PC-3 (cell line): ENCODE measurements at regions of chr5 and their contacts with region 1.

Region 1: GRCh38 chr5:151740336-151740942 is 18.0 kb downstream of the ATOX1 start:
- DNase-seq: peak; percentile 76
- ATAC-seq: peak; percentile 27
- H3K4me3 ChIP-seq: no peak overlapping the region
- H3K27ac ChIP-seq: peak overlapping the region; percentile 70
- H3K4me1 ChIP-seq: peaks cover 57% of the 10 kb centered on the region
- H3K27me3 ChIP-seq: no peaks in the 10 kb centered on the region
- CTCF ChIP-seq: peak; percentile 93

Region 2: GRCh38 chr5:151447174-151448037 is 293.0 kb before region 1 on chr5 and contains the start of gene SLC36A1:
- CTCF ChIA-PET with region 1: interaction called, 4 read pairs
- POLR2A ChIA-PET with region 1: no interaction called
- intact Hi-C with region 1: loop called (anchors 1 kb)
- DNase-seq: peak; percentile 95
- ATAC-seq: peak; percentile 77
- H3K4me3 ChIP-seq: peak within 1 kb of the TSS; percentile 82
- H3K27ac ChIP-seq: no peak within 1 kb of the TSS
- H3K4me1 ChIP-seq: peaks cover 25% of the 10 kb centered on the region
- H3K27me3 ChIP-seq: 0 out of 2 replicates have a peak, but pooled peaks cover 3% of the 10 kb centered on the region
- CTCF ChIP-seq: peak; percentile 91
- total RNA-seq, gene SLC36A1: 3.6 and 5.7 TPM in 2 replicates

Region 3: GRCh38 chr5:151617841-151618710 is 122.4 kb before region 1 on chr5:
- CTCF ChIA-PET with region 1: no interaction called
- POLR2A ChIA-PET with region 1: no interaction called
- intact Hi-C with region 1: loop called (anchors 1 kb)
- DNase-seq: peak; percentile 95
- ATAC-seq: peak; percentile 54
- H3K4me3 ChIP-seq: no peak overlapping the region
- H3K27ac ChIP-seq: peak overlapping the region; percentile 73
- H3K4me1 ChIP-seq: peaks cover 75% of the 10 kb centered on the region
- H3K27me3 ChIP-seq: no peaks in the 10 kb centered on the region
- CTCF ChIP-seq: no peak

Region 4: DNA sequence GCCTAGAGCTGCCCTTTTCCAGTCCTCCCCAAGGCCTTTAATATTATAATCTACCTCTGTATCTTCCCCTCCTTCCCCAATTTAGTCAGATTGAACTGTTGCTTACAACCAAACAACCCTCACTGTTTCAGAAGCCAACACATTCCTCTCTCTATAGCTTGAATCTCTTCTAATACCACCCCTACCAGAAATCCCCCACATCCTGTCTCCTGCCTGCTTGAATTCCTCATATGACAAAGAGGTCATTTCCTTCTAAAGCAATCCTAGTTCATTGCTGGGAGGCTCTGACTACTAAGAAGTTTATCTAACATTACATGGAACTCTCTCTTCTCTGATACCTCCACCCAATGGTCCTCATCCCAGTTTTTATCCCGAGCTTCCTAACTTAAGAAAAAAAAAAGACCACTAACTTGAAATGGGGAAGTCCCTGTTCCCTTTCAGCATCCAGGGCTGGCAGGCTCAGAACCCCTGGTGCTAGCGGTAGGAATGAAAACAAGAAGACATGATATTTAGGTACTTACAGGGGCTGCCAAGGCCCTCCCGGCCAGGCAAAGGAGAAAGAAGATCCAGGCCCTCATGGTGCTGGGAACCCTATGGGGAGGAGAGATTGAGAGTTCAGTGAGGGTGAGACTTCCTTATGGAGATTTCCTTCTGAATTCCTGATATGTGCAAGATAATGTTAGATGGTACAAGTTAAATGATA is 64.7 kb before region 1 on chr5:
- CTCF ChIA-PET with region 1: no interaction called
- POLR2A ChIA-PET with region 1: no interaction called
- intact Hi-C with region 1: loop called (anchors 1 kb)
- DNase-seq: no peak
- ATAC-seq: no peak; the same call in 1 of the 2 replicates
- H3K4me3 ChIP-seq: no peak overlapping the region
- H3K27ac ChIP-seq: no peak overlapping the region
- H3K4me1 ChIP-seq: peaks cover 29% of the 10 kb centered on the region
- H3K27me3 ChIP-seq: no peaks in the 10 kb centered on the region
- CTCF ChIP-seq: no peak

Region 5: GRCh38 chr5:151692320-151692719 is 48.1 kb before region 1 on chr5:
- CTCF ChIA-PET with region 1: no interaction called
- POLR2A ChIA-PET with region 1: no interaction called
- intact Hi-C with region 1: no loop called
- DNase-seq: peak; percentile 74
- ATAC-seq: peak; percentile 84
- H3K4me3 ChIP-seq: no peak overlapping the region
- H3K27ac ChIP-seq: no peak overlapping the region
- H3K4me1 ChIP-seq: peaks cover 12% of the 10 kb centered on the region
- H3K27me3 ChIP-seq: no peaks in the 10 kb centered on the region
- CTCF ChIP-seq: no peak

Region 6: DNA sequence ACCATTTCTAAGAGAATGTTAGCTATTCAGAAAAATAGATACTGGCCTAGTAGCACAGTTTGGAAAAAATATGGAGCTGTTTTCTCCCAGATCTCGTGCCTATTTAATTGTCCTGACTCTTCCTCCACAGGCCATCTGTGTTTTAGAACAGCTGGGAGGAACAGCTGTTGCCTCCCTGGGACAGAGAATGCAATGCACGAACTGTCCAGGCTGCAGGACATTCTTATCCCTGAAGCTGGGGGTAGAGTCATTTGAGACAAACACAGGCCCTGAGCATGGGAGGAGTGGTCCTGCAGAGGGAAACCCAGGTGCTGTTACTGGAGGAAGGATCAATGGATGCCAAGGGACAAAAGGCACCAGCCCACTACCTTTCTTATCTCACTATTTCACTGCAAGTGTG is 32.9 kb before region 1 on chr5:
- CTCF ChIA-PET with region 1: interaction called, 6 read pairs
- POLR2A ChIA-PET with region 1: no interaction called
- intact Hi-C with region 1: loop called (anchors 2 kb)
- DNase-seq: no peak
- ATAC-seq: no peak
- H3K4me3 ChIP-seq: no peak overlapping the region
- H3K27ac ChIP-seq: no peak overlapping the region
- H3K4me1 ChIP-seq: no peaks in the 10 kb centered on the region
- H3K27me3 ChIP-seq: no peaks in the 10 kb centered on the region
- CTCF ChIP-seq: no peak

Region 7: DNA sequence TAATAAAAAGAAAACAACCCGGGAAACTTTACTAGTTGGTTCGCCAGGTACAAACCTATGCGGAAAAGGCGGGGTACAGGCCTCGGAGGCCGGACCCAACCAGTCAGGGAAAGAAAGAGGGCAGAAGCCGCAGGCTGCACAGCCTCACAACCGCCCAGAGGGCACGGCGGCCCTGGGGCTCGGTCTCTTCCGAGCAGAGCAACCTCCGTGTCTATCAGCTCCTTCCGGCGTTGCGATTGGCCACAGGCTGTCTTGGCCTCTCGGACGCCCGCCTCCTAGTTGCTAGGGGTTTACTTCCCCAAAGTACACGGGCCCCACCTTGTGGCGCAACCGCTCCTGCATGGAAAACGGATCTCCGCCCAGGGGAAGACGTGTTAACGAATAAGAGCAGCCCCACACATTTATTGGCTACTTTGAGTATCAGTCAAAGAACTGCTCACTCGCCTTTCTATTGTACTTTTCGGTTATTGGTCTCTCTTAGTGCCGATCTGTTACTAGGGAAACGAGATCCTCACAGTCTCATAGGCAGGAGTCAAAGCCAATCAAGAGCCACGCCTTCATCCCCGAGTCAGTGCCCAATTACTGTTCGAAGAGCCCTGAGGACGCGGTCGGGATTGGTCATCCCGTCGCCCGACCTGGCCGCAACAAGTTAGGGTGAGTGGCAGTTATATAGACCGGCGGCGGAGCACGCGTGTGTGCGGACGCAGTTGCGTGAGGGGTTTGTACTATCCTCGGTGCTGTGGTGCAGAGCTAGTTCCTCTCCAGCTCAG is 31.0 kb after region 1 on chr5 and contains the start of gene G3BP1:
- CTCF ChIA-PET with region 1: interaction called, 16 read pairs
- POLR2A ChIA-PET with region 1: interaction called, 4 read pairs
- intact Hi-C with region 1: loop called (anchors 1 kb)
- DNase-seq: peak; percentile 100
- ATAC-seq: peak; percentile 86
- H3K4me3 ChIP-seq: peak within 1 kb of the TSS; percentile 85
- H3K27ac ChIP-seq: peak within 1 kb of the TSS; percentile 91
- H3K4me1 ChIP-seq: peaks cover 28% of the 10 kb centered on the region
- H3K27me3 ChIP-seq: no peaks in the 10 kb centered on the region
- CTCF ChIP-seq: peak; percentile 69
- total RNA-seq, gene G3BP1: 133 and 157 TPM in 2 replicates